Activated CD8-positive, alpha-beta T cell treated with anti-CD3 and anti-CD28 coated beads, Interleukin-2, amount 10 ng/mL, durations not matched to agents 7 days and 5 days (primary cell): ENCODE measurements at regions of chr1 and their contacts with region 1.

Region 1: DNA sequence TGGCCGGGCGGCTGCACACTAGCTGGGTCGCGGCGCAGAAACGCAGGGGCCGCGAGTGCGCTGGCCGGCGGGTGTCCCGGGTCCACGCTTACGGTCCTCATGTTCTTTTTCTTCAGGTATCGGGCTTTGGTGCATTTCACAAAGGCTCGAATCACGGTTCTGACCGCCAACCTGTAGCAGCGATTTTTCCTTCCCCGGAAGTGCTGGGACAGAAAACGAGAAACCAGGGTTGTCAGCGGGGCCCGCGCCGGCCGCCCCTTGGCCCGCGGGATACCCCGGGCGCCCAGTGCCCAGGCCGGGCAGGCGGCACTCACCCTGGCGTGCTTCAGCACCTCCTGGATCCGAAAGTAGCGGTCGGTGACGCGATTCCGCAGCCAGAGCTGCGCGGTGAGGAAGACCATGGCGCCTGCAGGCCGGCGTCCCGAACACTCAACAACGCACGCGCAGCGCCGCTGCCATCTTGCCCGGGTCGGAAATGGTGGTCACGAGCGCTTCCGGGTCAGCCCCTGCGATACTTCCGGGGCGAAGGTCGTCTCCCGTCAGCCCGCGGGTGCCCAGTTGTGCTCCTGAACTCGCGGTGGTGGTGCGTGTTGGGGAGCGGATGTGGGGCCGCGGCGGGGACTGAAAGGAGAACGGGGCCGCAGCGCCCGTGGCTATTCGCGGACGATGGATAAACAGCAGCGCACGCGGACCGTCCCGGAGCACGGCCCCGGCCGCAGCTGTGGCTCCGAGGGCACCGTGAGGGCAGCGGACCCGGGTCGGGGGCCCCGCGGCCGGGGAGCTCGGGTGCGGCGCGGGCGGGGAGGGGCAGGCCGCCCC is at the start of gene MRPL20:
- DNase-seq: peak; percentile 98
- ATAC-seq: peak; percentile 95
- H3K4me3 Mint-ChIP-seq: peak within 1 kb of the TSS; percentile 87
- H3K27ac Mint-ChIP-seq: peak within 1 kb of the TSS; percentile 95
- H3K4me1 Mint-ChIP-seq: peaks cover 39% of the 10 kb centered on the region
- H3K27me3 Mint-ChIP-seq: no peaks in the 10 kb centered on the region
- total RNA-seq, gene MRPL20: 111 to 117 TPM

Region 2: GRCh38 chr1:1441002-1441888 is 34.2 kb after region 1 on chr1:
- CTCF ChIA-PET with region 1: interaction called, 18 read pairs
- POLR2A ChIA-PET with region 1: no interaction called
- DNase-seq: peak; percentile 58
- ATAC-seq: peak; percentile 81
- H3K4me3 Mint-ChIP-seq: no peak overlapping the region
- H3K27ac Mint-ChIP-seq: no peak overlapping the region
- H3K4me1 Mint-ChIP-seq: peaks cover 4% of the 10 kb centered on the region
- H3K27me3 Mint-ChIP-seq: peaks cover 2% of the 10 kb centered on the region